Activated T-helper 2 cell treated with anti-CD3 and anti-CD28 coated beads, Interferon-gamma antibody, Interleukin-2, Interleukin-4, amounts not matched to agents 10 μg/mL and 5 μg/mL and 100 μg/mL, durations not matched to agents 14 hours and 24 hours and 36 hours (primary cell): ENCODE measurements at regions of chr16 and their contacts with region 1.

Region 1: GRCh38 chr16:72203401-72203800 is 31.4 kb upstream of the PMFBP1 start:
- DNase-seq: peak; percentile 11
- H3K4me3 Mint-ChIP-seq: no peak overlapping the region
- H3K27ac Mint-ChIP-seq: peak overlapping the region; percentile 18
- H3K4me1 Mint-ChIP-seq: peaks cover 18% of the 10 kb centered on the region
- H3K27me3 Mint-ChIP-seq: peaks cover 7% of the 10 kb centered on the region

Region 2: GRCh38 chr16:71867939-71868338 is 335.5 kb before region 1 on chr16:
- intact Hi-C with region 1: no loop called
- DNase-seq: no peak
- H3K4me3 Mint-ChIP-seq: no peak overlapping the region
- H3K27ac Mint-ChIP-seq: no peak overlapping the region
- H3K4me1 Mint-ChIP-seq: peaks cover 18% of the 10 kb centered on the region
- H3K27me3 Mint-ChIP-seq: no peaks in the 10 kb centered on the region

Region 3: GRCh38 chr16:72036098-72036497 is 167.3 kb before region 1 on chr16:
- intact Hi-C with region 1: no loop called
- DNase-seq: no peak
- H3K4me3 Mint-ChIP-seq: no peak overlapping the region
- H3K27ac Mint-ChIP-seq: no peak overlapping the region
- H3K4me1 Mint-ChIP-seq: no peaks in the 10 kb centered on the region
- H3K27me3 Mint-ChIP-seq: no peaks in the 10 kb centered on the region

Region 4: DNA sequence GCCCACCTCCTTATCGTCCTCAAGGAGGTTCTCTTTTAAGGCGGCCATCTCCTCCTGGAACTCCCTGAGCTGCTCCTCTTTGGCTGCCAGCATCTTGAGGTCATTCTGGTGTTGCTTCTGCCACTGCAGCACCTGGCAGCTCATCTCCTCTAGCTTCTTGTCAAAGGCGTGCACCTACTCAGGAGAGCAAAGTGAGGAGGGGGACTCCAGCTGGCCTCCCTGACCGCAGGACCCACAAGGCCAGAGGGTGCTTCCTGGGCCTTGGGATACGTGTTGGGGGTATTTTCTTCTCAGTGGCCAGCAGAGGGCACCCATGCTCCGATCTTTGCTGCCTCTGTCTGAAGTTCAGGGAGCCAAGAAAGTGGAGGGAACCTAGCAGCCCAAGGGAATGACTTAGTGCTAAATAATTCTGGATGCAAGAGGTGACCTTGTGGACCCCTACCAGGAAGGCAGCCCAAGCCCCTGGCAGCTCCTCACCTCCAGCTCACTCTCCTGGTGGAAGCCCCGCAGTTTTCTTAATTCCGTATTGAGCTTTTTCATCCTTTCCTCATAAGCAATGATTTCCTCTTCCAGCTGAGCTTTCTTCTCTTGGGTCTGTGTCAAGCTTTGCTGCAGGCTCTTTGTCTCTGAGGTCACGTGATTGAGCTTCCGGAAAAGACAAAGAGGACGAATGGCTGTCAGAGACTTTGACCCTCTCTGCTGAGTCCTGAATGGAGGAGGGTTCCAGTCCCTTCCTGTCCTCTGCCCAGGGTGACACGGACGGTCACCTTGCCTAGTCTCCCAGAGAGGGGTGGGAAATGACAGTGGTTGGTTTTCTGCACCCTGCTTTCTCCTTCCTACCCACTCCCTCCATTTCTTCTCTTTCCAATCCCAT is 78.4 kb before region 1 on chr16:
- intact Hi-C with region 1: loop called (anchors 2 kb)
- DNase-seq: peak; percentile 28
- H3K4me3 Mint-ChIP-seq: no peak overlapping the region
- H3K27ac Mint-ChIP-seq: no peak overlapping the region
- H3K4me1 Mint-ChIP-seq: peaks cover 2% of the 10 kb centered on the region
- H3K27me3 Mint-ChIP-seq: peaks cover 4% of the 10 kb centered on the region